HCT116 (cell line): ENCODE measurements at regions of chr12 and their contacts with region 1.

Region 1: DNA sequence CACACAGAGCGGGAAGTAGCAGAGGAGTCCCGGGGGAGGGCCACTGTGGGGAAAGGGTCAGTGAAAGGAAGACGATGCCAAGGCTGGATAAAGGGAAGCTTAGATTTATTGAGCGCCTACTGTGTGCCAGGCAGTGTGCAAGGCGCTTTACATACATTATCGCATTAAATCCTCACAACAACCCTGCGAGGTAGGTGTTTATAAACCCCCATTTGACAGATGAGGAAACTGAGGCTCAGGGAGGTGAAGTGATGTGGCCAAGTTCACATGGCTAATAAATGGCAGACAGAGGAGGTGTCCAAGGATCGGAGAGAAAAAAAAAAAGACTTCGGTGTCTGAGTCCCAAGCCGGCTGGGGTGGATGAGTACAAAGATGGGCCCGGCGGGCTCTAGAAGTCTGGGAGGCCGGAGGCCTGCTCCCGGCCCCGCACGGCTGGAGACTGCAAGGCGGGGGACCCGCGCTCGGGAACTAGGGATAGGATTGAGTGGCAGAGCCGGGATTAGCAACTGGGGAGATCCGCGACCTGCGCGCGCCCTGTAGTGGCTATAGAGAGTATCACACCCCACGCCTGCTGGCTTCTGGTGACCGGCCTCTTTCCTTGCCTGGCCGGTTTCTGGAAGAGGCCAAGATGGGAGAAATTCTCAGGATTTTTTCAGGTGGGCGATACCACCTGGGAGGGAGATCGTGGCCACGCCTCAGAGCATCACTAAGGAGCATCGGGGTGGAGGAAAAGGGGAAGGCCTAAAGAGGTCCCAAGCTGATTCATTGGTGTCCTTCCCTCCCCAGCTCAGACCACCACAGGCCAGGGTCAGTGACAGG is 3.9 kb downstream of the DDN start:
- DNase-seq: peak; percentile 71
- ATAC-seq: peak; percentile 70
- H3K4me3 ChIP-seq: peak overlapping the region; percentile 4 to 19; a peak in 2 of 4 replicates
- H3K27ac ChIP-seq: no peak overlapping the region
- H3K4me1 ChIP-seq: peaks cover 9 to 42% of the 10 kb centered on the region in 2 experiments
- H3K27me3 ChIP-seq: no peaks in the 10 kb centered on the region
- CTCF ChIP-seq: peak; percentile 74 to 80 (median 78)
- POLR2A ChIP-seq: no peak
- RAD21 ChIP-seq: peak; percentile 84

Region 2: GRCh38 chr12:48817873-48818830 is 177.1 kb before region 1 on chr12 and contains the start of gene CACNB3:
- CTCF ChIA-PET with region 1: no interaction called
- POLR2A ChIA-PET with region 1: no interaction called
- RAD21 ChIA-PET with region 1: no interaction called
- intact Hi-C with region 1: no loop called
- DNase-seq: no peak
- ATAC-seq: peak; percentile 53
- H3K4me3 ChIP-seq: peak within 1 kb of the TSS; percentile 51 to 60
- H3K27ac ChIP-seq: peak within 1 kb of the TSS; percentile 30; the same call in 1 of the 2 replicates
- H3K4me1 ChIP-seq: peaks cover 20 to 43% of the 10 kb centered on the region in 2 experiments
- H3K27me3 ChIP-seq: no peaks in the 10 kb centered on the region
- CTCF ChIP-seq: no peak
- POLR2A ChIP-seq: no peak
- RAD21 ChIP-seq: no peak
- total RNA-seq, gene CACNB3: 22.0 TPM

Region 3: DNA sequence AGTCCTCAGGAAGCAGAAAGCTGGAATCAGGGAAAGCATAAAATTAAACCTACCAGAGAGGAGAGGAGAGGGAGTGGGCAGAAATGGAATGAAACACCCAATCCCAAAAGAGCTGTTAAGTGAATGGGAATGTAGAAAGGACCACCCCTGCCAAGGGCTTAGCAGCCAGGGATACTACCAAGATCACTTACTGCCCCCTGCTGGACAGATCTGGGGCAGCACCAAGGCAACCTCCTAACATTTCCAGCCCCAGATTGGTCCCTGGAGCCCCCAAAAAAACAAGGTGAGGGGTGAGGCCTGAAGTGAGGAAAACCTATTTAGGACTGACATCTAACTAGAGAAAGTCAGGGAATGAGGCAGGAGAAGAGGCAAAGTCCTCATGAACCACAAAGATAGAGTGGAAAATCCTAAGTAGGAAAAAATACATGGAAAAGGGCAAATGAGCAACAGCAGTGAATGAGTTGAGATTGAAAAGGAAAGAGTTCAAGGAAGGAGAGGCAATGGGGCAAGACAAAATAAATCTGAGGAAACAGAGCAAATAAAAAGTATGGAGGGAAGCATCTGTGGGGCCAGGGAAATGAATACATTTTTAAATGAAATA is 58.8 kb before region 1 on chr12:
- CTCF ChIA-PET with region 1: no interaction called
- POLR2A ChIA-PET with region 1: no interaction called
- RAD21 ChIA-PET with region 1: no interaction called
- intact Hi-C with region 1: loop called (anchors 2 kb)
- DNase-seq: peak; percentile 36
- ATAC-seq: peak; percentile 89
- H3K4me3 ChIP-seq: no peak overlapping the region
- H3K27ac ChIP-seq: no peak overlapping the region
- H3K4me1 ChIP-seq: no peaks in the 10 kb centered on the region
- H3K27me3 ChIP-seq: no peaks in the 10 kb centered on the region
- CTCF ChIP-seq: peak; percentile 53 to 96 (median 94); a peak in 5 of 6 replicates
- POLR2A ChIP-seq: no peak
- RAD21 ChIP-seq: peak; percentile 61